PC-9 (cell line): ENCODE measurements at regions of chr17 and their contacts with region 1.

Region 1: DNA sequence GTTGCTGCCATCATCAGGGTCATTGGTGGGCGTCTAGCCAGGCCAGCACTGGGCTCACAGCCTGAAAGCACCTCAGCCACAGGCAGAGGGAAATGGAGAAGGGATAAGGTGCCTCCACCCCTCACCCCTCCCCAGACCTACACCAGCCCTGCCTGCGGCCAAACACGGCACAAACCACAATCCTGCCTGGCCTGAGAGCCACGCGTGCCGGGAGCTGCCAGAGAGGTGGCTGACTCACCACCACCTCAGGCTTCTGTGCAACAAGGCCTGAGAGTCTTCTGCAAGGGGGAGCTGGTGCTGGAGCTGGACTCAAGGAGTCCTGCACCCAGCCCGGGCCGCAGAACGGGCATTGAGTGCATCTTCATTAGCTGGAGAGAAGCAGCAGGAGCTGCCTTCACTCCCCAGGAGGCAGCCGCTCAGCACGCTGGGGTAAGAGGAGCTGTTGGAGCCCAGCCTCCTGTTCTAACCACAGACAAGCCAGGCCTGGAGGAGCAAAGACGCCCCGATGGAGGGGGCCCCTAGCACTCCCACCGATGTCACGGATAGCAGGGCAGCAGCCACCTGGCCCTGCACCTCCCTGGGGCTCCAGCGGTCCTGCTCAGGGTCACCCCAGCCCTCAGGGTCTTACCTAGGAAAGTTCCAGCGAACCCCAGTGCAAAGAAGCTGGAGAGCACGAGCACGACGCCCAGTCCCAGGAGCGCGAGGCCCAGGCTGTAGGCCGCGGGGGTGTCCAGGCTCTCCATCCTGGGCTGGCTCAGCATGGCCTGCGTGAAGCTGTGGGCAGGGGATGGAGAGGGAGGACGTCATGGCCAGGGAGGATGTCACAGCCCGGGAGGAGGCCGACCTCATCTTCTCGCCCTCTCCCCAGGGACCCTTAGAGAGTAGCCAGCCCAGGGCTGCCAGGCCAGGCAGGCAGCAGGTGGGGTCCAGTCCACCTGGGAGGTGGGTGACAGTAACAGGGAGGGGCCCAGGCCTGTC is 16.0 kb upstream of the RASD1 start:
- DNase-seq: peak; percentile 89 to 95
- H3K4me3 ChIP-seq: no peak overlapping the region
- H3K27ac ChIP-seq: no peak overlapping the region
- H3K4me1 ChIP-seq: peaks cover 24% of the 10 kb centered on the region
- H3K27me3 ChIP-seq: no peaks in the 10 kb centered on the region
- CTCF ChIP-seq: no peak

Region 2: DNA sequence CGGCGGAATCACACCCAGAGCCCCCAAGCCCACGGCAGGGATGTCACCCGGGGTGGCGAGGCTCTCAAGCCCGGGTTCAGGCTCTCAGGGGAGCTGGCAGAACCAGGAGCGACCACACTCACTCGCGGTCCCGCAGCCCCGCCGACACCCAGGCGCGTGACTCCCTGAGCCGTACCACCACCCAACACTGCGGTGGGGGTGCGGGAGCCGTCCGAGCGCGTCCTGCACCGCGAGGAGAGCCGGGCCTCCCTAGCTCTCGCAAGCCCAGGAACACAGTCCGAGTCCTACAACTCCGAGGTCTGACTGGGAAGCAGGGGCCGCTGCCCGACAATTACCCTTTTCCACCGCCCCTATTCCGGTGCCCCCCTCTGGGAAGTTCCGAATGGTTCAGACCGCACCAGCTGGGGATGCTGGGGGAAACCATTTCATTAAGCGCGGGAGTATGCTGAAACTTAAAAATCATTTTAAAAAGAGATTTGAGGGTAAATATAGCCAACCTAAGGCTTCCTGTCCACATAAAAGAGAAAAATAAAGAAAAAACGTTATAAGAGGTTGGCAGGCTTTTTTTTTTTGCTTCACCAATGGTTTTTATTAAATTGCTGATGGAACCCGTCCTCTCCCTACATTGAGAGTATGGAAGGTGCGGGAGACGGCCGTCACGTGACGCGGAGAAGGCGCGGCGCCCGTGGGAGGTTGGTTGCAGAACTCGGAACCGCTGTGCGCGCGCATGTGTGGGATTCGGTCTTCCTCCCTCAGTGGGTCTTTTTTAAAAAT is 275.0 kb before region 1 on chr17 and contains the start of gene FLCN:
- CTCF ChIA-PET with region 1: no interaction called
- POLR2A ChIA-PET with region 1: interaction called, 19 read pairs
- intact Hi-C with region 1: no loop called
- DNase-seq: peak; percentile 61 to 79
- H3K4me3 ChIP-seq: peak within 1 kb of the TSS; percentile 87
- H3K27ac ChIP-seq: peak within 1 kb of the TSS; percentile 82
- H3K4me1 ChIP-seq: peaks cover 19% of the 10 kb centered on the region
- H3K27me3 ChIP-seq: no peaks in the 10 kb centered on the region
- CTCF ChIP-seq: no peak
- total RNA-seq, gene FLCN: 38.5 and 38.8 TPM in 2 replicates